PC-3 (cell line): ENCODE measurements at regions of chr10 and their contacts with region 1.

Region 1: DNA sequence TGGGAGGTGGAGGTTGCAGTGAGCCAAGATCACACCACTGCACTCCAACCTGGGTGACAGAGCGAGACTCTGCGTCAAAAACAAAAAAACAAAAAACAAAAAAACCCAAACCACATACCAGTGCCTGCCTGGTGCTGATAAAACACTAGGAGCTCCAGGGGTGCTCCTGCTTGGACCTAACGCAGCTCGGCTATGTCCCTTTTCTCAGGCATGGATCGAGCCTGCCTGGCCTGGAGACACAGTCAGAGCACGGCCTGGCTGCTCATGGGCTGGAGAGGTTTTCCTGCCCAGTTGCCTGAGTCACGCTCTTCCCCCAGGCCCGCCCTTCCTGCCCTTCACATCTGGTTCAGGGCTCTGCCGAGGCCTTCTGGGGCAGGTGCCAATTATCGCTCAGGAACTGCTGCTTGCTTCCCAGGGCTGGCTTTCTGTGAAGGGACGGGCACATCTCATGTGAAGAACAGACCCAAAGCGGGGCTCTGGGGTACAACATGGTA is 12.6 kb upstream of the NPFFR1 start:
- DNase-seq: peak; percentile 96
- ATAC-seq: peak; percentile 100
- H3K4me3 ChIP-seq: no peak overlapping the region
- H3K27ac ChIP-seq: peak overlapping the region; percentile 27; the same call in 1 of the 2 replicates
- H3K4me1 ChIP-seq: peaks cover 15% of the 10 kb centered on the region
- H3K27me3 ChIP-seq: no peaks in the 10 kb centered on the region
- CTCF ChIP-seq: no peak

Region 2: GRCh38 chr10:70233109-70233938 is 63.1 kb before region 1 on chr10 and contains the start of gene PPA1:
- CTCF ChIA-PET with region 1: no interaction called
- POLR2A ChIA-PET with region 1: no interaction called
- intact Hi-C with region 1: loop called (anchors 1 kb)
- DNase-seq: peak; percentile 100
- ATAC-seq: peak; percentile 87
- H3K4me3 ChIP-seq: peak within 1 kb of the TSS; percentile 91
- H3K27ac ChIP-seq: peak within 1 kb of the TSS; percentile 75
- H3K4me1 ChIP-seq: peaks cover 29% of the 10 kb centered on the region
- H3K27me3 ChIP-seq: no peaks in the 10 kb centered on the region
- CTCF ChIP-seq: peak; percentile 71
- total RNA-seq, gene PPA1: 392 and 440 TPM in 2 replicates

Region 3: GRCh38 chr10:70267161-70267933 is 29.1 kb before region 1 on chr10:
- CTCF ChIA-PET with region 1: no interaction called
- POLR2A ChIA-PET with region 1: no interaction called
- intact Hi-C with region 1: loop called (anchors 2 kb)
- DNase-seq: peak; percentile 99
- ATAC-seq: peak; percentile 97
- H3K4me3 ChIP-seq: no peak overlapping the region
- H3K27ac ChIP-seq: no peak overlapping the region
- H3K4me1 ChIP-seq: peaks cover 16% of the 10 kb centered on the region
- H3K27me3 ChIP-seq: no peaks in the 10 kb centered on the region
- CTCF ChIP-seq: peak; percentile 51

Region 4: DNA sequence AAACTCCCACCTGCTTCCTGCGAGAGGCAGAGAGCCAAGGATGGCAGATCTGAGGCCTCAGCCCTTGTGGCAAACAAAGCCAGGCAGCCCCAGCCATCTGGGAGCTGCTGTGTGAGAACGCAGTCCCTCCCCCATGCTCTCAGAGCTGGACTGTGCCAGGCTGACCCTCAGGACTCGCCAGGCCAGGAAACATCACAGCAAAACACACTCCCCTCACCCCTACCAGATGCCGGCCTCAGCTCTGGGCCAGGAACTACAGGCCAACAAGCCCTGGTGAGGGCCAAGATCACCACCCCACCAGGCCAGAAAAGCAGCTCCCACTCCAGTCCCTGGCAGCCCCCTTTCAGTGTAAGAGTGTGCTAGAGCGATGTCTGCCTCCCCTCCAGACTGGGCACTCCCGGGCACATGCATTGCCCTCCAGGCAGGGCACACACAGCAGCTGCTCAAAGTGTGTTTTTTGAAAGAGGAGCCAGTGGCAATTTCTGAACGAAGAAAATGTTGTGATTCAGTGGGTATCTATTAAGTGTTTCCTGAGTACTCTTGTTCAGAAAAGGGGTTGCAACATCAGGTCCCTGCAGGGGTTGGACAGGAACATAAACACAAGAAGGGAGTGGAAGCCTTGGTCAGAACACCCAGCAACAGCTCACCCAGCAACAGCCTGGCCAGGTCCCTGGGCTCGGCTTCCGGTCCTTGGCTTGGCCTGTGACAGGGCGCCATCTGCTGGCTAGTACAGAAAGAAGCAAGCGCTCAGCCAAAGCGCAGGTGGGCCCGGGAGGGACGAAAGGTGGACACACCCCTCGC is 67.7 kb after region 1 on chr10:
- CTCF ChIA-PET with region 1: no interaction called
- POLR2A ChIA-PET with region 1: no interaction called
- intact Hi-C with region 1: loop called (anchors 1 kb)
- DNase-seq: peak; percentile 98
- ATAC-seq: peak; percentile 97
- H3K4me3 ChIP-seq: peak overlapping the region; percentile 36; the same call in 1 of the 2 replicates
- H3K27ac ChIP-seq: peak overlapping the region; percentile 14
- H3K4me1 ChIP-seq: peaks cover 14% of the 10 kb centered on the region
- H3K27me3 ChIP-seq: no peaks in the 10 kb centered on the region
- CTCF ChIP-seq: peak; percentile 100

Region 5: DNA sequence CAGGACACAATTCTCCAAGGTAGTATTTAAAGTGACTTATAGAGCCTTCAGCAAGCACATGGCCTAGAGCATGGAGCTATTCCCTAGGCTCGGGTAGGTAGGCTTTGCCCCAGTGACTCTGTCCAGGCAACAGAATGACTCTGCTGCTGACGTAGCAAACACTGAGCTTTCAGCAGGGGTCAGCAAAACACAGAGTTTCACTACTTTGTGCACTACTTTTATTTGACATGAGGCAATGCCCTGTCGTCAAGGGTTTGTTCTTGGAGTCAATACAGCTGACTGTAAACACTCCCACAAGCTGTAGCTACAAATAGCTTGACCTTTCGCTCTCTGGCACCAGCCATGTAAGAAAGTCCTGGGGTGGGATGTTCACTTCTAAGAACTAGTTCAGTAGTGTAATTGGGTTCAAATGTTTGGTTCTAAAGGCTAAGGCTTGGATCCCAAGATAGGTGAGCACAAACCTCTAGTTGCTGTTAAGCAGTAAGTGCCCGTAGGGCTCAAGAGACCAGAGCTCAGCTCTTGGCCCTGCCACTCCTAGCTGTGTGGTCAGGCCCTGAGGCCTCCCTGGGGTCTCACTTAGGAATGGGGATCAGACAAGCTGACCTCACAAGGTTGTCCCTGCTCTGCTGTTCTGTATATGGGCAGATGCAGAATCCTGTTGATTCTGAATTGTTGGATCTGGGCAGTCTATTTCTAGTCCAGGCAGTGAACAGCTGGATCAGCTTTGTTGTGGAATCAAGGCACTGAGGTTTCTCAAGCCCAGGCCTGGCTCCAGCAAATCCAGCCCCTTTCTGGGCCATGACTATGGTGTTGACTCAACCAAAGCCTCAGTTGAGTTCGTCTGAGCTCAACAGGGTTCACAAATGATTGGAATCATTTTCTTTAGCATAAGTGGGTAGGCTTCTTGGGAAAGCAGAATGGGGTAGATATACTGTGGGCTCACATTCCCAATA is 134.3 kb after region 1 on chr10:
- CTCF ChIA-PET with region 1: no interaction called
- POLR2A ChIA-PET with region 1: no interaction called
- intact Hi-C with region 1: no loop called
- DNase-seq: no peak
- ATAC-seq: no peak
- H3K4me3 ChIP-seq: no peak overlapping the region
- H3K27ac ChIP-seq: no peak overlapping the region
- H3K4me1 ChIP-seq: no peaks in the 10 kb centered on the region
- H3K27me3 ChIP-seq: no peaks in the 10 kb centered on the region
- CTCF ChIP-seq: 0 out of 2 replicates have a peak, but pooled peaks have one; percentile 11